Body of pancreas (tissue), 4 donors: ENCODE measurements at regions of chr1 and their contacts with region 1.

Region 1: GRCh38 chr1:235513495-235514366 is 9.5 kb upstream of the B3GALNT2 start:
- DNase-seq: peak; percentile 24 to 66 (median 36)
- ATAC-seq: peak; percentile 75
- H3K4me3 ChIP-seq: no peak overlapping the region
- H3K27ac ChIP-seq: no peak overlapping the region
- H3K4me1 ChIP-seq: no peaks in the 10 kb centered on the region
- H3K27me3 ChIP-seq: no peaks in the 10 kb centered on the region
- CTCF ChIP-seq: peak; percentile 79 to 98 (median 89)
- POLR2A ChIP-seq: no peak

Region 2: GRCh38 chr1:235784950-235785349 is 271.2 kb after region 1 on chr1:
- intact Hi-C with region 1: loop called (anchors 5 kb)
- DNase-seq: no peak
- ATAC-seq: no peak
- H3K4me3 ChIP-seq: no peak overlapping the region
- H3K27ac ChIP-seq: no peak overlapping the region
- H3K4me1 ChIP-seq: no peaks in the 10 kb centered on the region
- H3K27me3 ChIP-seq: no peaks in the 10 kb centered on the region
- CTCF ChIP-seq: no peak
- POLR2A ChIP-seq: no peak

Region 3: GRCh38 chr1:235883261-235883927 is 369.7 kb after region 1 on chr1:
- intact Hi-C with region 1: no loop called
- DNase-seq: peak; percentile 83 to 90 (median 88)
- ATAC-seq: peak; percentile 90
- H3K4me3 ChIP-seq: no peak overlapping the region
- H3K27ac ChIP-seq: peak overlapping the region in 2 of 4 donors; percentile 15 to 44
- H3K4me1 ChIP-seq: peaks cover 13% of the 10 kb centered on the region
- H3K27me3 ChIP-seq: no peaks in the 10 kb centered on the region
- CTCF ChIP-seq: no peak
- POLR2A ChIP-seq: peak in 2 of 3 donors; percentile 29 to 38